Naive thymus-derived CD4-positive, alpha-beta T cell (primary cell): ENCODE measurements at regions of chr5 and their contacts with region 1.

Region 1: DNA sequence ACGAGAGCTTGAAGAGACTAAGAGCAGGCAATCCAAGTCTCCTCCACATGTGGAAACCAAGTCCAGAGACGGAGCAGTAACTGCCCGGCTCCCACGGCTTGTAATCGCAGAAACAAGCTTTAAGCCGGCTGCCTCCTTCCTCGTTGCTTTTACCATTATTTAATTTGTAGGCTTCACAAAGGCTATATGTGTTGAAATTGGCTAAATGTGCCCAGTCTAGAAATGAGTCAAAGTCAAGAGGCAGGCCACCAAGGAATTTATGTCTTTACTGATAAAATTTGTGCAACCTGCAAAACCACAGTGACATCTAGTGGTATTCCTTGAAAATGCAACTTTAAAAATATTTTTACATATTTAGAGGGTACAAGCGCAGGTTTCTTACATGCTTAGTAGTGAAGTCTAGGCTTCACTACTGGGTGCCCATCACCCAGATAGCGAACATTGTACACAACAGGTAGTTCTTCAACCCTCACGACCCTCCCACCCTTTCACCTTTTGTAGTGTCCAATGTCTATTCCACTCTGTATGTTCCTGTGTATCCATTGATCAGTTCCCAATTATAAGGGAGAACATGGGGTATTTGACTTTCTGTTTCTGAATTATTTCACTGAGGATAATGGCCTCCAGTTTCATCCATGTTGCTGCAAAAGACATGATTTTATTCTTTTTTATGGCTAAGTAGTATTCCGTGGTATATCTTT is 33.5 kb upstream of the EBF1 start:
- DNase-seq: peak in 6 of 9 donors; percentile 8 to 59 (median 54)
- ATAC-seq: peak; percentile 52
- H3K4me3 ChIP-seq: no peak overlapping the region
- H3K4me3 Mint-ChIP-seq: no peak overlapping the region
- H3K27ac ChIP-seq: no peak overlapping the region
- H3K27ac Mint-ChIP-seq: no peak overlapping the region
- H3K4me1 ChIP-seq: no peaks in the 10 kb centered on the region
- H3K4me1 Mint-ChIP-seq: no peaks in the 10 kb centered on the region
- H3K27me3 ChIP-seq: no peaks in the 10 kb centered on the region
- H3K27me3 Mint-ChIP-seq: peaks cover 0 to 29% (median 7%) of the 10 kb centered on the region in 5 donors

Region 2: DNA sequence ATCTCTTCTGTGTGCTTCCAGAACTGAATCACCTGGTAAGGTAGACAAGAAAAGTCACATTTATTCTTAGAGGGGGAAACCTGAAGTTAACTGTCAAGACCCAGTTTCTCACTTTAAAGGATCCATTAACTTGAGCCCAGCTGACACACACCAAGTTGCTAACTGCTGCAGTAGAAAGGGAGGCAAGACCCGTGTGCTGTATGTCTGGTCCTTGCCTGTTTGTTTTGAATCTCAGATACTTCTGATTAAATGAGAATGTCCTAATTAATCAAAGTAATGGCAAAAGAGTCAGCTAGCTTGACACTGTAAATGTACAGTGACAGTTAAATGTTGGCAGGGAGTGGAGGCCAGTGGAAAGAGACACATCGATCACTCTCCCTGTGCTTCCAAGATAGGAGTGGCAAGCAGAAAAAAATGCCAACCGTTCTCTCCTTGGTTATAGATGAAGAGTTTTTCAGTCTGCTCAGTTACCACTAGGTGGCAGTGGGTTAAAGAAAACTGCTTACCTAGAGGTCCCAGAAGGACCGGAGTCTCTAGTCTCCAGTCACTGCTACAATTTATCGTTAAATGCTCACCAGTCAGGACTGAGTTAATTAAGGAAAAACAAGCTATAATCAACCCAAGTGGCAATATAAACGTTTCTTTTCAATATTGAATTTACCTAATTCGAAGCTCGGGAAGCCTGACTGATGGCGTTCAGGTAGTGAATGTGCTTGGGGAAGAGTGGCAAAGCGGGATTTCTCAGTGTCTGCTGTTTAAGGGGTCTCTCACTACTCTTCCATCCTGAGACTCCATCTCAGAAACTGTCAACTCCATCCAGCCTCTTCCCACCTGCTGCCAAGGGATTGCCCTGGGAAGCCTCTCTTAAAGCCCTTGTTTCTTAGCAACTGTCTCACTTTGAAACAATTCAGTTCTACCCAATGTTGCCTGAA is 1371.2 kb before region 1 on chr5:
- CTCF ChIA-PET with region 1: no interaction called
- POLR2A ChIA-PET with region 1: no interaction called
- intact Hi-C with region 1: loop called (anchors 1 to 2 kb)
- DNase-seq: peak in 6 of 9 donors; percentile 12 to 44 (median 34)
- ATAC-seq: peak; percentile 88
- H3K4me3 ChIP-seq: no peak overlapping the region
- H3K4me3 Mint-ChIP-seq: no peak overlapping the region
- H3K27ac ChIP-seq: no peak overlapping the region
- H3K27ac Mint-ChIP-seq: no peak overlapping the region
- H3K4me1 ChIP-seq: no peaks in the 10 kb centered on the region
- H3K4me1 Mint-ChIP-seq: peaks cover 0 to 5% (median 0%) of the 10 kb centered on the region in 7 donors
- H3K27me3 ChIP-seq: no peaks in the 10 kb centered on the region
- H3K27me3 Mint-ChIP-seq: peaks cover 0 to 6% (median 0%) of the 10 kb centered on the region in 5 donors

Region 3: DNA sequence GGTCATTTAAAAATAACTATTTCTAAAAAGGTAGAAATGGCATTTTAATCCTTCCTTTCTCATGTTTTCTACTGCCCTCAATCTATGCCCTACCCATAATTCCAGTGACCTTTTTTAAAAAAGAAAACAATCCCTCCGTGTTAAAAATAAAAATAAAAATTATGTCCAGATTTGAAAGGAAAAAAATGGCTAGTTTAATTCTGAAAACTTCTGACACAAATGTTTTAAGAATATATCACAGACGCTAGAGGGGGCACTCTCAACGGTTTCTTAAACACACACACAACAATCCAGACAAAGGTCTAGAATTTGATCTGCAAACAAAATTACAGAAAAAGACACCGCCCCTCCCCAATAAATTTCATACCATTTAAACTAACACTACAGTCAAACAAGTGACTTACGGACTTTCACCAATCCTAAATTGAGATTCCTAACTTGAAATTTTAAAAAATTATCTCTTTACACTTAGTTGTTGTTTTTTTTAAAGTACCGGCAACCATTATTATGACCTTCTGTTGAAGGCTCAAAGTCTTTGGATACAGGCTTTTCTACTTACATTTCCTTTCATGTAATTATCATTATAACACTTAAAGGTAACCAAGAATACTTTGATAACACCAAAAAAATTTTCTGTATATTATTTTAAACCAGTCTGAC is 1312.5 kb before region 1 on chr5:
- CTCF ChIA-PET with region 1: interaction called, 3 read pairs
- POLR2A ChIA-PET with region 1: no interaction called
- intact Hi-C with region 1: loop called in 1 of 2 experiments (anchors 1 kb)
- DNase-seq: peak in 7 of 9 donors; percentile 5 to 45 (median 32)
- ATAC-seq: peak; percentile 55
- H3K4me3 ChIP-seq: no peak overlapping the region
- H3K4me3 Mint-ChIP-seq: no peak overlapping the region
- H3K27ac ChIP-seq: no peak overlapping the region
- H3K27ac Mint-ChIP-seq: peak overlapping the region in 6 of 9 donors; percentile 0 to 84 (median 40)
- H3K4me1 ChIP-seq: peaks cover 0 to 8% of the 10 kb centered on the region in 2 donors
- H3K4me1 Mint-ChIP-seq: peaks cover 15 to 52% (median 41%) of the 10 kb centered on the region in 7 donors
- H3K27me3 ChIP-seq: no peaks in the 10 kb centered on the region
- H3K27me3 Mint-ChIP-seq: no peaks in the 10 kb centered on the region

Region 4: GRCh38 chr5:157948738-157949410 is 1184.3 kb before region 1 on chr5:
- CTCF ChIA-PET with region 1: no interaction called
- POLR2A ChIA-PET with region 1: no interaction called
- intact Hi-C with region 1: loop called in 1 of 2 experiments (anchors 1 kb)
- DNase-seq: peak; percentile 44 to 78 (median 69)
- ATAC-seq: peak; percentile 97
- H3K4me3 ChIP-seq: no peak overlapping the region
- H3K4me3 Mint-ChIP-seq: peak overlapping the region in 4 of 10 donors; percentile 1 to 44 (median 4)
- H3K27ac ChIP-seq: no peak overlapping the region
- H3K27ac Mint-ChIP-seq: no peak overlapping the region
- H3K4me1 ChIP-seq: no peaks in the 10 kb centered on the region
- H3K4me1 Mint-ChIP-seq: peaks cover 5 to 10% (median 6%) of the 10 kb centered on the region in 7 donors
- H3K27me3 ChIP-seq: no peaks in the 10 kb centered on the region
- H3K27me3 Mint-ChIP-seq: peaks cover 5 to 27% (median 9%) of the 10 kb centered on the region in 5 donors

Region 5: DNA sequence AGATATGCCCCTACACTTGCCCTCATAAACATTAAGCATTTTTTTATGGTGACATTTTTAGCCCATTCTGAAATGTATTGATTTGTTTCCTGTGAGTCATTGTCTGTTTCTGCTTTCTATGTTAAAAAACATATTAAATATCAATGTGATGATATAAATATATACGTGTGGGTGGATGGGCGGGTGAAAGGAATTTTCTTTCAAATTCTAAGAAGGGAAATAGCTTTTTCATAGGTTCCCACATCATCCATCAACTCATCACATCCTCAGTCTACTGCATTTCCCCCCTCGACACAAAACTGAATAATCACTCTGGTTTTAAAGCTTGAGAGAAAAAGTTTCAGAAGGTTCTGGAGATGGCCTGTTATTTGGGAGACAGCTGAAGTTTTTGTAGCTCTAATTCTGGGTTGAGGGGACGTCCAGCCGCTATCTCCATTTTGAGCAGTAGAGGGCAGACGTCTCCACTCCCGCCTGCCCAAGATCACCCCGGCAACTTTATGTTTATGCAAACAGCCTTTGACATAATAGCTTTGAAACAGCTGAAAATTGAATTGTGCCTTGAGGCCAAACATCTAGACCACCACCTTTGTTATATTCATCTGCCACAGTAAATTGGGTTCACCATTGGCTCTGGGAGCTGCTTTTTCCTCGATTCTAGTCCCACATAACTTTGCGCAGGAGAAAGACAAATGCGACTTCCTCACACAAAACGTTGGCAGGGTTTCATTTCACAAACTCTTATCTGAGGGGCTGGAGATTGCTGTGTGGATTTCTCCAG is 1058.0 kb before region 1 on chr5:
- CTCF ChIA-PET with region 1: interaction called, 10 read pairs
- POLR2A ChIA-PET with region 1: no interaction called
- intact Hi-C with region 1: loop called (anchors 1 kb)
- DNase-seq: peak; percentile 7 to 63 (median 42)
- ATAC-seq: peak; percentile 83
- H3K4me3 ChIP-seq: no peak overlapping the region
- H3K4me3 Mint-ChIP-seq: peak overlapping the region in 3 of 10 donors; percentile 9 to 38 (median 37)
- H3K27ac ChIP-seq: no peak overlapping the region
- H3K27ac Mint-ChIP-seq: peak overlapping the region in 4 of 9 donors; percentile 39 to 61 (median 42)
- H3K4me1 ChIP-seq: no peaks in the 10 kb centered on the region
- H3K4me1 Mint-ChIP-seq: peaks cover 0 to 5% (median 4%) of the 10 kb centered on the region in 7 donors
- H3K27me3 ChIP-seq: no peaks in the 10 kb centered on the region
- H3K27me3 Mint-ChIP-seq: peaks cover 0 to 27% (median 10%) of the 10 kb centered on the region in 5 donors

Region 6: DNA sequence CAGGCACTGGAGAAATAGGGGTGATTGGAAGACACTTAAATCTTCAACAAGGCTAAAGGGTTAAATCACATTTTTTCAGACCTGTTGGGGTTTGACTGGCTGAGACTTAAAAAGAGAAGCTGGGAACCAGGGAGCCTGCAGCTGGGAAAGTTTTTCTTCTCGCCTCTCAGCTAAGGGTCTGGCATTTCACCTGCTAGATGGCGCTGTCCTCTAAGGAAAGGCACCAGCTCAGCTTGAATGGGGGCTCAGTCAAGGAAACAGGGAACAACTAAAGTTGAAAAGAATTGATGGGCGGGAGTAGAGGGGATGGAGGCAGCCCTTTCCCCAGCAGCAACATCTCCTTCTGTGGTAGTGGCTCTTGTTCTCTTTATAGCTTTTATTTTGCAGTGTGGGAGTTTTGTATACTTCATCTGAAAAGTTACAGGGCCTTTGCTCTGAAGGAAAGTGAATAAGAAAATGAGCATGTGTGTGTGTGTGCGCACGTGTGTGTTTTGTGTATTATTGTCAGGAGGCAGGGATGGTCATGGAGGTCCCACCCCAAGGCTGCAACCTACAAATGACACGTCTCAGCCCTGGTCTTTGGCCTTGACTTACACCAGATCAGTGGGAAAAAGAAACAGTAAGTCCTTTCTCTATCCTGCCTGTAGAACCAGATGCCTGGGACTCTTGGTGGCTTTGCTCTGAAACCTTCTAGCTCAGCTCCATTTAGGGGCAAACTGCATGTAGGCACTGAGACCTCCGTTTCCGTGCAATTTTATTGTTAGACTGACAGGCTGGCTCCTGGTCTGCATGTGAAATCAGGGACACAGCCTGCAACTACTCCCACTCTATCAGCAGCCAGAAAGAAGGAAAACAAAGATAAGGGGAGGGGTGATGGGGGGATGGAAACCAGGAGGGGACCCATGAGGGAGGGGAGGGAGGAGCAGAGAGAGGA is 958.0 kb before region 1 on chr5:
- CTCF ChIA-PET with region 1: interaction called, 11 read pairs
- POLR2A ChIA-PET with region 1: no interaction called
- intact Hi-C with region 1: loop called in 1 of 2 experiments (anchors 1 kb)
- DNase-seq: peak; percentile 11 to 58 (median 46)
- ATAC-seq: peak; percentile 65
- H3K4me3 ChIP-seq: no peak overlapping the region
- H3K4me3 Mint-ChIP-seq: no peak overlapping the region
- H3K27ac ChIP-seq: no peak overlapping the region
- H3K27ac Mint-ChIP-seq: peak overlapping the region in 1 of 9 donors; percentile 41
- H3K4me1 ChIP-seq: no peaks in the 10 kb centered on the region
- H3K4me1 Mint-ChIP-seq: peaks cover 0 to 5% (median 0%) of the 10 kb centered on the region in 7 donors
- H3K27me3 ChIP-seq: no peaks in the 10 kb centered on the region
- H3K27me3 Mint-ChIP-seq: peaks cover 0 to 10% (median 4%) of the 10 kb centered on the region in 5 donors

Region 7: DNA sequence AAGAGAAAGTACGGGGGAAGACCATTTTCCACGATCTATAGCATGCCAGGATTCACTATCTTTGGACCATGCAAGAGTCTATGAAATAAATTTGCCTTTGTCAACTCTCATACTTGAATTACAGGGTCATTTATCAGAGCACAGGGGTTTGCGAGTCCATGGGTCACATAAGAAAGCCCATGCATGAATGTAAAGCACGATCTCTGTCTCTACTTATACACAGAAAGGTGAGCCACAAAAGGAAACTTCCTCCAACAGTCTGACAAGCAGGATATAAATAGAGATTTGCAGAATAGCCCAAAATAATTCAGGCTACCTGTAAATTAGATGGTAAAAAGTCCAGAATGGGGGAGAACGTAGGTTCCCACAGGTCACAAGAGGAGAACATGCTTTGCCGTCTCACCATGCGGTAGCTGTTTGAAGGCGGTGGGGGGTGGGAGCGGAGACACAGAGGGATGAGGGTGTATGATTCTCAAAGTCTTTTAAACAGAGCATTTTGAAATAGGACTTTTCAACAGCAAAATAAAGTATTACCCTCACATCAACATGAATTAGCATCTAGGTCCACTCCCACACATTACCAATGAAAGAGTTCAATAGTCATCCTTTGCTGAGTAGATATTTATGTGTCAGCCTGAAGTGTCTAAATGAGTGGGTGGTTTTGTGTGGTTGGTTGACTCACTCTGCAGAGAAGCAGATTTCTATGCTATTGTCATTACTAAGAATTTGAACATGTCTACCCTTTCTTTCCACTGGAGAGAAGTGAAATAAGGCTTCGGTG is 313.2 kb before region 1 on chr5:
- CTCF ChIA-PET with region 1: no interaction called
- POLR2A ChIA-PET with region 1: no interaction called
- intact Hi-C with region 1: no loop called
- DNase-seq: peak in 1 of 9 donors; percentile 21
- ATAC-seq: no peak
- H3K4me3 ChIP-seq: no peak overlapping the region
- H3K4me3 Mint-ChIP-seq: peak overlapping the region in 3 of 10 donors; percentile 1 to 43 (median 3)
- H3K27ac ChIP-seq: no peak overlapping the region
- H3K27ac Mint-ChIP-seq: peak overlapping the region in 2 of 9 donors; percentile 0 to 54
- H3K4me1 ChIP-seq: peaks cover 0 to 4% of the 10 kb centered on the region in 2 donors
- H3K4me1 Mint-ChIP-seq: peaks cover 8 to 46% (median 29%) of the 10 kb centered on the region in 7 donors
- H3K27me3 ChIP-seq: no peaks in the 10 kb centered on the region
- H3K27me3 Mint-ChIP-seq: no peaks in the 10 kb centered on the region

Region 8: DNA sequence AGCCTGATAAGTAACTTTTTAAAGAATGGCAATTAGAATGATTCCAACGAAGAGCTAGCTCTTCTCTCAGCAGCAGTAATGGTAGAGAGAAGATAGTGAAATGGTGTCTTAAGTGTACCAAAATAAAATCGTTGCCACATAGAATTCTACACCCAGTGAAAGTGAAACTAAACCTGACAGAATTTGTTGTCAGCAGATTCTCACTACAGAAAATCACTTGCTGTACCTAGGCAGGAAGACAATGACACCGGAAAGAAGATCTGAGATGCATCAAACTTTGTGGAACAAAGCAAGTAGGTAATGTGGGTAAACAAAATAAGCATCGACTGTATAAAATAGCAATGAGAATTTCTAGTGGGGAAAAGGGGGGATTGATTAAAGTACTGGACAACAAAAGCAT is 12.7 kb before region 1 on chr5:
- CTCF ChIA-PET with region 1: interaction called, 4 read pairs
- POLR2A ChIA-PET with region 1: interaction called, 3 read pairs
- intact Hi-C with region 1: loop called in 1 of 2 experiments (anchors 1 kb)
- DNase-seq: peak in 7 of 9 donors; percentile 41 to 80 (median 71)
- ATAC-seq: peak; percentile 84
- H3K4me3 ChIP-seq: peak overlapping the region; percentile 6
- H3K4me3 Mint-ChIP-seq: peak overlapping the region; percentile 48 to 88 (median 72)
- H3K27ac ChIP-seq: peak overlapping the region; percentile 22
- H3K27ac Mint-ChIP-seq: peak overlapping the region; percentile 86 to 96 (median 93)
- H3K4me1 ChIP-seq: peaks cover 7 to 17% of the 10 kb centered on the region in 2 donors
- H3K4me1 Mint-ChIP-seq: peaks cover 9 to 26% (median 22%) of the 10 kb centered on the region in 7 donors
- H3K27me3 ChIP-seq: no peaks in the 10 kb centered on the region
- H3K27me3 Mint-ChIP-seq: peaks cover 0 to 14% (median 0%) of the 10 kb centered on the region in 5 donors